Activated CD8-positive, alpha-beta T cell treated with anti-CD3 and anti-CD28 coated beads for 36 hours (primary cell): ENCODE measurements at regions of chr5 and their contacts with region 1.

Region 1: DNA sequence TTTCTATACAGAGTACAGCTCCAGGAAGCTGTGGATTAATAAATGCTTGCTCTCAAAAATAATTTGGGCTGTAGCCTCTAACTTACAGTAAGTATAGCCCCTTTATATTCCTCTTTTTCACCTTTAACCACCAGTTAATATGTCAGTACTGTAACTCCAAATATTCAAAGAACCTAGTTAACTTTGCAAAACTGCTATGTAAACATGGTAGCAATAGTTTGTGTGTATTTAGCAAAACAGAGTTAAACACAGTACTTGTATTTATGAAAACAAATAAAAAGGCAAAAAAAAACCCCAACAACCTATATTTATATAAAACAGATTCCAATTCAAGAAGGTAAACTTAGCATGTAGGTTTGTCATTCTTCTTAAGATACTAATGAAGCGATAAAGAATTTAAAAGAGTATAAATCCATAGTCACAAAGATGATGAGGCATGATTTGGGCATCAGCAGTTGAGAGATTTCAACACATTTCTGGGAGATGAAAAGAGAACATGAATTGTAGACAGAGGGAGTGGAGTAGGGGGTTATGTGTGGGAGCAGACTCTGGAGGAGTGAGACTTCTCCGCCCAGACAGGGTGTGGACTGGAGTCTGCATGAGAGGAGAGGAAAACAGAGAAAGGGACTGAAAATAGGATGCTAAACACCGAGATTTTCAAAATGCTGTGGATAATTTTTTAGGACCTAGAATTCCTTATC is 47.0 kb upstream of the F2RL1 start:
- DNase-seq: no peak
- ATAC-seq: no peak
- H3K4me3 Mint-ChIP-seq: no peak overlapping the region
- H3K27ac Mint-ChIP-seq: no peak overlapping the region
- H3K4me1 Mint-ChIP-seq: peaks cover 2% of the 10 kb centered on the region
- H3K27me3 Mint-ChIP-seq: no peaks in the 10 kb centered on the region
- CTCF ChIP-seq: no peak

Region 2: DNA sequence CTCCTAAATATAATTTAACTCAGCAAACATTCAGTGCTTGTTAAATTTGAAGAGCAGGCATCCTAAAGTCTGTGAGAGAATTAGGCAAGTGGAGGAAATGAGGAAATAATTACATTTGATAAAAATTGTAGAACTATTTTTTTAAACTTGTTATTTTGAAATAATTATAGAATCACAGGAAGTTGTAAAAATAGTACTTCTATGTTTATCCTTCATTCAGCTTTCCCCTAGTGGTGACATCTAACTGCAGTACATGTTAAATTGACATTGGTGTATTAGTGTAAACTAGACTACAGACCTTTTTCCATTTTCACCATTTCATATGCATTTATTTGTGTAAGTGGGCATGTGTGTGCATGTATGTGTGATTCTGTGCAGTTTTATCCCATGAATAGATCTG is 200.3 kb before region 1 on chr5:
- CTCF ChIA-PET with region 1: no interaction called
- POLR2A ChIA-PET with region 1: no interaction called
- intact Hi-C with region 1: no loop called
- DNase-seq: no peak
- ATAC-seq: no peak
- H3K4me3 Mint-ChIP-seq: no peak overlapping the region
- H3K27ac Mint-ChIP-seq: no peak overlapping the region
- H3K4me1 Mint-ChIP-seq: peaks cover 3% of the 10 kb centered on the region
- H3K27me3 Mint-ChIP-seq: no peaks in the 10 kb centered on the region
- CTCF ChIP-seq: no peak

Region 3: DNA sequence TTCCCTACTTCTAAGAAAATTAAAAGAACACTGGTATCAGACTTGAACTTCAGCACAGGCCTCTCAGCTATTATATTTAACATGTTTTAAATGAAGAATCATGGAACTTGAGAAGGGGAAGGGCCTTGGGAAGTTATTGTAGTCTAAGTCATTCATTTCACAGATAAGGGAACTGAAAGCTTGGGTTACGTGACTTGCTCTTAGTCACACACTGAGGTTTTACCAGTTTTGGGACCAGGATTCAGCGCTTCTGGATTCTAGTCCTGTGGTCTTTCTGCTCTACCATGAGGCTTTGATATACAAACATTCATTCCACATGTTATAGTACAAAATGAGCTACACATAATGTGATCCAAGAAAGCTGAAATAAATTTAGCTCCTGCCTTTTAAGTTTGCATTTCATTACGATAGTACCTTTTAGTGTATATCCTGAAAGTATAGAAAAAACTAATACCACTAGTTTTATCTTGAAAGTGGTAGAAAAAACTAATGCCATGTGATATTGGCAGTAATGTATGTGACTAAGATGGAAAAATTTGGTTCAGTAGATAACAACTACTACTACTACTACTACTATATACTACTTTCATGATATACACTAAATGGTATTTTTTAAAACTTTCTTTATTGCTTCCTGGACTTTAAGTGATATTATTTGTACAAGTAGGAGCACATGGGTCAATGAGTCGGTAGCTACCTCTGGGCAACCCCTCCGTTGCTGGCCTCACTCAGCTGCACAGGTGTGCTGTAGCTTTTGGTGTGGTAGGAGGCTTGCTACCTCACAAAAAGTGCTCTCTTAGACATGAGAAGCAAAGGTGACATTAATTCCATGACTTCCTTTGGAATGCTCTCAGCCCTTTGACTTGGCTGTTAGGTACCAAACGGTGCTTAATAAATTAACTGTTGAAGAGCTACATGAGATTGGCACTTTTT is 189.4 kb before region 1 on chr5:
- CTCF ChIA-PET with region 1: interaction called, 19 read pairs
- POLR2A ChIA-PET with region 1: no interaction called
- intact Hi-C with region 1: no loop called
- DNase-seq: peak; percentile 17
- ATAC-seq: peak; percentile 81
- H3K4me3 Mint-ChIP-seq: no peak overlapping the region
- H3K27ac Mint-ChIP-seq: peak overlapping the region; percentile 17
- H3K4me1 Mint-ChIP-seq: peaks cover 19% of the 10 kb centered on the region
- H3K27me3 Mint-ChIP-seq: no peaks in the 10 kb centered on the region
- CTCF ChIP-seq: no peak

Region 4: GRCh38 chr5:76641514-76642120 is 130.2 kb before region 1 on chr5:
- CTCF ChIA-PET with region 1: interaction called, 17 read pairs
- POLR2A ChIA-PET with region 1: no interaction called
- intact Hi-C with region 1: no loop called
- DNase-seq: peak; percentile 83
- ATAC-seq: peak; percentile 60
- H3K4me3 Mint-ChIP-seq: no peak overlapping the region
- H3K27ac Mint-ChIP-seq: no peak overlapping the region
- H3K4me1 Mint-ChIP-seq: peaks cover 6% of the 10 kb centered on the region
- H3K27me3 Mint-ChIP-seq: no peaks in the 10 kb centered on the region
- CTCF ChIP-seq: peak; percentile 83

Region 5: DNA sequence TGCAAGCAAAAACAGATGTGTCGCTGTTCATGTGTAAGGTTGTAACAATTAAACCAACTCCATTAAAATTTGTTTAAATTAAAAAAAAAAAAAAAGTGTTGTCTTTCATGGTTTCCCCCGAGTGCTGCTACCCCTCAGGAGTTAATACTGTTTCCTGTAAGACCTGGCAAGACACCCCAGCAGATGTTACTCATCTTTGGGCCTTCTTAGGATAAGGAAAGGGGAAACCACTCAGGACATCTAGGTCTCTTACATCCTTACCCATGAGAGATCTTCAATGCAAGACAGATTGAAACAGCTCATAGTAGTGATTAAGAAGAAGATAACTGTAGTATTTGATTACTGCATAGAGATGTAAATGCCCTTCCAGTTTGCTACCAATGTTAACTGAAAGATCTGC is 89.5 kb before region 1 on chr5:
- CTCF ChIA-PET with region 1: interaction called, 10 read pairs
- POLR2A ChIA-PET with region 1: no interaction called
- intact Hi-C with region 1: no loop called
- DNase-seq: no peak
- ATAC-seq: no peak
- H3K4me3 Mint-ChIP-seq: no peak overlapping the region
- H3K27ac Mint-ChIP-seq: no peak overlapping the region
- H3K4me1 Mint-ChIP-seq: peaks cover 11% of the 10 kb centered on the region
- H3K27me3 Mint-ChIP-seq: no peaks in the 10 kb centered on the region
- CTCF ChIP-seq: no peak

Region 6: DNA sequence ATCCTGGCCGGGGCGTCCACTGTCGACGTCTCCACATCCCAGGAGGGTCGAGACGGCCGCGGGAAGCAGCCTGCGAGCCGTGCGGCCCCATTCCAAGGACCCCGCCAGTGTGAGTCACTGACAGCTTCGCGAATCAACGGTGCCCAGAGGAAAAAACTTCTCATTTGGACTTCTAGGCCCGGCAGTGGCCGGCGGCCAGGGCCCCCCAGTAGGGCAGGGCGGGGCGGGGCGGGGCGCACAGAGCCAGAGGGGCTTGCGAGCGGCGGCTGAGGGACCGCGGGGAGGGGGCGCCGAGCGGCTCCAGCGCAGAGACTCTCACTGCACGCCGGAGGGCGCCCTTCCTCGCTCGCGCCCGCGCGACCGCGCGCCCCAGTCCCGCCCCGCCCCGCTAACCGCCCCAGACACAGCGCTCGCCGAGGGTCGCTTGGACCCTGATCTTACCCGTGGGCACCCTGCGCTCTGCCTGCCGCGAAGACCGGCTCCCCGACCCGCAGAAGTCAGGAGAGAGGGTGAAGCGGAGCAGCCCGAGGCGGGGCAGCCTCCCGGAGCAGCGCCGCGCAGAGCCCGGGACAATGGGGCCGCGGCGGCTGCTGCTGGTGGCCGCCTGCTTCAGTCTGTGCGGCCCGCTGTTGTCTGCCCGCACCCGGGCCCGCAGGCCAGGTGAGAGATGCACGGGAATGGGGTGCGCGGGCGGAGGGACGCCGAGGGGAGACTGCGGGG is 56.0 kb before region 1 on chr5 and contains the start of gene F2R:
- CTCF ChIA-PET with region 1: interaction called, 23 read pairs
- POLR2A ChIA-PET with region 1: no interaction called
- intact Hi-C with region 1: loop called (anchors 5 kb)
- DNase-seq: peak; percentile 58
- ATAC-seq: peak; percentile 81
- H3K4me3 Mint-ChIP-seq: peak within 1 kb of the TSS; percentile 73
- H3K27ac Mint-ChIP-seq: peak within 1 kb of the TSS; percentile 46
- H3K4me1 Mint-ChIP-seq: peaks cover 32% of the 10 kb centered on the region
- H3K27me3 Mint-ChIP-seq: peaks cover 42% of the 10 kb centered on the region
- CTCF ChIP-seq: peak; percentile 83
- total RNA-seq, gene F2R: 2.5 to 3.5 TPM

Region 7: DNA sequence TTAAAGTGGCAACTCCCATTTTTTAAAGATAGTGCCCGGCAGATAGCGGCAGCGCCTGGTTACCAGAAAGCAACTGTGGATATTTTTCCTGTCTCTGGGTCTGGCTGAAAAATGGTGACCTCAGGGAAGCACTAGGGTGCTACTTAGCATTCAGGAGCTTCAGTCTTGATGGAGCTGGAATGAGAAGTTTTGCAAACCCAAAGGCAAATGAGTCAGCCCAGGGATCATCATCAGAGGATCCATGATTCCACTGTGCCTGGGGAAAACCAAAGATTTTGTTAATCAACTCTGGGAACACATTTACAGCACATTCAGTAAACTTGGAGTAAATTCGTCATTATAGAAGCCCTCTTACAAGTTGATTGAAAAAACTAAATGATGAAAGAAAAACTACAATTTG is 29.3 kb before region 1 on chr5:
- CTCF ChIA-PET with region 1: interaction called, 30 read pairs
- POLR2A ChIA-PET with region 1: interaction called, 5 read pairs
- intact Hi-C with region 1: no loop called
- DNase-seq: no peak
- ATAC-seq: no peak
- H3K4me3 Mint-ChIP-seq: no peak overlapping the region
- H3K27ac Mint-ChIP-seq: no peak overlapping the region
- H3K4me1 Mint-ChIP-seq: peaks cover 22% of the 10 kb centered on the region
- H3K27me3 Mint-ChIP-seq: no peaks in the 10 kb centered on the region
- CTCF ChIP-seq: no peak